ENCODE measurements at regions of chr18 and their contacts with region 1.

Region 1: GRCh38 chr18:24262087-24262486 is 123.2 kb downstream of the CABYR start:
- DNase-seq: no peak
- H3K4me3 ChIP-seq: peak overlapping the region in 1 of 59 donors; percentile 33
- H3K27ac ChIP-seq: peak overlapping the region in 58 of 59 donors; percentile 7 to 99 (median 82)
- H3K27me3 ChIP-seq: no peaks in the 10 kb centered on the region
- CTCF ChIP-seq: no peak

Region 2: DNA sequence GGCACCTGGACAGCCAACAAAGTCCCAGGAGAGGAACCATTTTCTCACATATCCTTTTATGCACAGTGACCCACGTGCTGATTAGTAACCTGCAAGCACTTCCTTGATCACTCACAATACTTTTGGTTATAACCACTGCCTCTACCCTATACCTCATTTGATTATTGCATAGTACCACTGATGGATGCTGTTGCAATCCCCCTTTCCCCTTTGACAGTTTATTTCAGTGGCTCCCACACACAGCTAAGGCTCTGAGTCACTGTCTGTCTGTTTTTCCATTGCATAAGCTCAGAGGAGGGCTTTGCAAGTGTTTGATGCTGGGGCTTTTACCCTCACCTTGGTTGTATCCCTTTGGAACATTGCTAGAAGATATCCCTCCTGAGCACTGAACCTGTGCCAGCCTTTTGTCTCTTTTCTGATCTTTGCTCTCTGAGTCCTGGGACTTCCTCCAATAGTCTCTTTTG is 1430.6 kb before region 1 on chr18:
- intact Hi-C with region 1: no loop called
- DNase-seq: no peak
- H3K4me3 ChIP-seq: no peak overlapping the region
- H3K27ac ChIP-seq: no peak overlapping the region
- H3K27me3 ChIP-seq: peaks cover 0 to 10% (median 0%) of the 10 kb centered on the region in 45 donors
- CTCF ChIP-seq: no peak

Region 3: GRCh38 chr18:24219561-24220317 is 42.3 kb before region 1 on chr18:
- intact Hi-C with region 1: loop called in 1 of 2 experiments (anchors 5 kb)
- DNase-seq: peak in 1 of 10 donors; percentile 53
- H3K4me3 ChIP-seq: peak overlapping the region in 2 of 59 donors; percentile 1 to 4
- H3K27ac ChIP-seq: peak overlapping the region in 56 of 59 donors; percentile 19 to 88 (median 76)
- H3K27me3 ChIP-seq: no peaks in the 10 kb centered on the region
- CTCF ChIP-seq: peak in 9 of 56 donors; percentile 4 to 23 (median 10)